Lower leg skin (tissue), 4 donors: ENCODE measurements at regions of chr2 and their contacts with region 1.

Region 1: DNA sequence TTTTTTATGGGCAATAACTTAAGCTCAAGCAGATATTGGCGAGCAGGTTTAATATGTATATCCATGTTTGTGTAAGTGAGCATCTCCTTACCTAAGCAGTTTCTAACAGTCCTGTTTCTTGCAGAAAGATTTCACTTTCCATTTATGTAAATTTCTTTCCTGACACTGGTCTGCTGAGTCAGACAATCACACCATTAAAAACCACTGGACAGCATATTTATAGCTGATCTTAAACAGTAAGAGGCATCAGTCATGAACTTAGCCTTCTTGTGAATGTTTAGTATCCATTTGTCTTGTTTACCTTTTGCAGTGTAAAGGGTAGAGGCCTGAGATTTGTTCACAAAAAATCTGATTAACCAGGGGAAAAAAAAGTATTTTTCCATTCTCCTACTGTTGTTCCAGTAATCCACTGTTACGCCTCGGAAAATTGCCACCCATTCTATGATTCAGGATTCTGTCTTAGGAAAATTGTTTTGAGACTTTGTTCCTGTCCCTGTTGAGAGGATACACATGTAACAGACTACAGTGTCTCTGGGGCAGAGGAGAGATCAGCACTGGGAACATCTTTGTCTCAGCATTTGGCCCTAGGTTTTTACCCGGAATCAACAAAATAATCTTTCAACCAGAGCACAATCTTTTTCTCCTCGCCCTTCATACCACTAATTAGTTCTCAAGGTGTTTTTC is 521.0 kb upstream of the NRP2 start:
- DNase-seq: no peak
- H3K4me3 ChIP-seq: no peak overlapping the region
- CTCF ChIP-seq: no peak
- POLR2A ChIP-seq: no peak

Region 2: GRCh38 chr2:205193836-205194228 is 32.5 kb after region 1 on chr2:
- intact Hi-C with region 1: loop called (anchors 1 kb)
- DNase-seq: no peak
- H3K4me3 ChIP-seq: no peak overlapping the region
- CTCF ChIP-seq: no peak
- POLR2A ChIP-seq: no peak

Region 3: GRCh38 chr2:207073801-207074678 is 1912.7 kb after region 1 on chr2:
- intact Hi-C with region 1: no loop called
- DNase-seq: no peak
- H3K4me3 ChIP-seq: no peak overlapping the region
- CTCF ChIP-seq: no peak
- POLR2A ChIP-seq: no peak